ENCODE measurements at regions of chr5 and their contacts with region 1.

Region 1: GRCh38 chr5:62980884-62981283 is 402.3 kb downstream of the LRRC70 start:
- DNase-seq: no peak
- H3K4me3 ChIP-seq: no peak overlapping the region
- CTCF ChIP-seq: no peak
- POLR2A ChIP-seq: no peak

Region 2: DNA sequence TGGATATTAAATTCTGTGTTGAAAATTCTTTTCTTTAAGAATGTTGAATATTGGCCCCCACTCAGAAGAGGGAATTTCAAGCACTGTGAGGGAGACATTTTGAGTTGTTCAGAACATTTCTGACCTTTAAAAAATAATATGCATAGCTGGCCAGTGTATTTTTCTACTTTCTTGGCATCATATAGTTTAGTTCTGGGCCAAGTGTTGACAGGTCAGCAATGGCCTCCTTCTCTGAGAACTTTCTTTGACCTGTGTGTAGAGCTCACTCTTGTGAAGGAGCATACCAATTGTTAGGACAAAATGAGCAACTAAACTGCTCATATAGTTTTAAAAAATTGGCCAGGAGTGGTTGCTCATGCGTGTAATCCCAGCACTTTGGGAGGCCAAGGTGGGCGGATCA is 26.3 kb before region 1 on chr5:
- intact Hi-C with region 1: no loop called
- DNase-seq: no peak
- H3K4me3 ChIP-seq: no peak overlapping the region
- CTCF ChIP-seq: no peak
- POLR2A ChIP-seq: no peak

Region 3: DNA sequence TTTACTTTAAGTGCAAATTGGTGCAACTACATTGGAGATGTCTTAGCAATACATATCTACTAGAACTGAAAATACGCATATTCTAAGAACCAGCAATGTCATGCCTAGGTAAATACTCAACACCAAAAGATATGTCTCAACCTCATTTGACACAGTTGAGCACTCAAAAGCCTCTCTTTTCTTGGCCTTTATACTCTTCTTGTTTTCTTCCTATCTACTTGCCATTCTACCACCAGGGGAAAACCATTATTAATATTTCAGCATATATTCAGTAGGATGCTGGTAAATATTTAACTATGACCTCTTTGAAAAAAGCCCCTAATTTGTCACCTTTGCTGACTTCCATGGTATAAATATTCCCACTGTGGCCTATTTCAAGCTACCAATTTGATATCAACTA is 41.5 kb after region 1 on chr5:
- intact Hi-C with region 1: loop called (anchors 1 kb)
- DNase-seq: no peak
- H3K4me3 ChIP-seq: no peak overlapping the region
- CTCF ChIP-seq: no peak
- POLR2A ChIP-seq: no peak

Region 4: GRCh38 chr5:64347309-64347708 is 1366.4 kb after region 1 on chr5:
- intact Hi-C with region 1: no loop called
- DNase-seq: no peak
- H3K4me3 ChIP-seq: no peak overlapping the region
- CTCF ChIP-seq: no peak
- POLR2A ChIP-seq: no peak

Measured in lower leg skin (tissue), 4 donors.